ENCODE measurements at regions of chr16 and their contacts with region 1.

Region 1: DNA sequence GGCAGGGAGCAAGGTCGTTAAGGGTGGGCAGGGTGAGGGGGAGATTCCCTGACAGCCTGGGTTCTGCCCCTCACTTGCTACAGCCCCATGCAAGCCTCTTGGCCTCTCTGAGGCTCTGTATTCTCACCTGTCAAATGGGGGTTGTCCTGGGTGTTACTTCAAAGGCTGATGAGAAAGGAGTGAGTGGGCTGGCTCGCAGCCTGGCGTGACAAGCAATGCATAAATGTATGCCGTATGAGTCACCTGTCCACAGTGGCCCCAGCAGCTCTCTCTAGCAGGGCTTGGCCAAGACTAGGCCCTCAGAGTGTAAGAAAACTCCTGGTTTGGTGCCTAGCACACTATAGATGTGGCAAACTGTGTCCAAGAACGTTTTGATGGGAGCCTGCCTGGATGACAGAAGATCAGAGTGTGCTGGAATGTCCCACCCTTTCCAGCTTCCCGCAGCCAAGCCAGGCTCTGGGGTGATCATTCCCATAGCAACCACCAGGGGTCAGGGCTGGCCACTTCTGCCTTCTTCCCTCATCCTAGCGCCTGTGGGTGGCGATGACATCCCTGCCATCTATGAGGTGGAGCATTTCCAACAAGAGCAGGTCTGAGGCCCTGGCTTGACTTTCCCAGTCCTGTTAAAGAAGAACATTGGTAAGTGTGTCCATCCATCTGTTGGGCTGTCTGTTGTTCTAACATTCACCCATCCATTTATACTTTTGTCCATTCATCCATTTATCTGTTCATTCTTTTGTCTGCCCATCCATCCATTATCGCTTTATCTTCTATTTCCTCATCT is 37.2 kb upstream of the ADGRG1 start:
- DNase-seq: peak; percentile 69 to 79 (median 78)
- ATAC-seq: peak; percentile 95 to 97 (median 96)
- H3K4me3 ChIP-seq: no peak overlapping the region
- H3K27ac ChIP-seq: no peak overlapping the region
- H3K4me1 ChIP-seq: no peaks in the 10 kb centered on the region
- H3K27me3 ChIP-seq: no peaks in the 10 kb centered on the region
- CTCF ChIP-seq: peak; percentile 89 to 95 (median 90)
- POLR2A ChIP-seq: no peak

Region 2: DNA sequence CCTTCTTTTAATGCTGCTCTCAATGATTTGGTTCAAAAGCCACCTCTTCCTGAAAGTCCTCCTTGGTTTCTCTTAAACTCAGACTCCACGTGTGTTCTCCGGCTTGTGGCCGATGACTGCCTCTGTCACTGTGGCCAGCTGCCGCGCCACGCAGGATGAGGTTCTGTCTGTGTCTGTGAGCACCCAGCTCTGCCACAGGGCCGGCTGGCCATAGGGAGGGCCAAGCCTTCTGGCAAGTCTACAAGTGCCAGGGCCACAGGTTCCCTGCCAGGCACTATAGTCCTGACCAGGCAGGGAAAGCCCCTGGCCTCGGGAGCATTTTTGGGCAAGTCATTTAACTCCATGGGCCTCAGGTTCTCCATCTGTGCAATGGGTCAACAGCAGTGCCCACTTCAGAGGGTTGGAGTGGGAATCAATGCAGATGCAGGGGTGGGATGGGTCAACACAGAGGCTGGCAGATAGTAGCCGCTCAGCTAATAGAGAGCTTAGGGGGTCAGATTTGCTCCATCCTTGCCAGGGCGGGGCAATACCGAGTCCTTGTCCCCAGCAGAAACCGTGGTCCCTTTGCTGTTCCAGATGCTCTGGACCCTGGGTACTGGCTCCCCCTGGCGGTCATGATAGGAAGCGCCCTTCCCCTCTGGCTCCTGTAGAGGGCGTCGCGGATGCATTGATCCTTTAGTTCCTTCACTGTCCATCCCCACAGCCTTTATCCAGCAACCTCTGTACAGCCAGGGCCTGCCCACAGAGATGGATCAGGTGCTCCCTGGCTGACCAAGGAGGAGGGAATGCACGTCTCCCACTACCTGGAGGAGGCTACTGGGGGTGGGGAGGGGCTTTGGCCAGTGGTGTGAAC is 57.5 kb after region 1 on chr16:
- intact Hi-C with region 1: loop called (anchors 2 to 5 kb)
- DNase-seq: peak; percentile 75 to 84 (median 83)
- ATAC-seq: peak; percentile 87 to 96 (median 92)
- H3K4me3 ChIP-seq: no peak overlapping the region
- H3K27ac ChIP-seq: peak overlapping the region in 1 of 3 donors; percentile 5
- H3K4me1 ChIP-seq: no peaks in the 10 kb centered on the region
- H3K27me3 ChIP-seq: no peaks in the 10 kb centered on the region
- CTCF ChIP-seq: peak; percentile 100
- POLR2A ChIP-seq: no peak

Measured in right lobe of liver (tissue), 6 donors.